ENCODE measurements at regions of chr9 and their contacts with region 1.

Region 1: GRCh38 chr9:127779136-127779981 is 893 bp upstream of the SH2D3C start:
- DNase-seq: peak in 1 of 3 donors; percentile 58
- ATAC-seq: peak; percentile 3 to 23 (median 9)
- H3K4me3 ChIP-seq: no peak overlapping the region
- H3K27ac ChIP-seq: peak overlapping the region; percentile 7 to 58 (median 47)
- H3K4me1 ChIP-seq: no peaks in the 10 kb centered on the region
- H3K27me3 ChIP-seq: no peaks in the 10 kb centered on the region
- CTCF ChIP-seq: no peak
- POLR2A ChIP-seq: no peak

Region 2: GRCh38 chr9:127586537-127586936 is 192.8 kb before region 1 on chr9:
- intact Hi-C with region 1: loop called in 1 of 2 experiments (anchors 5 kb)
- DNase-seq: peak; percentile 73 to 82 (median 75)
- ATAC-seq: peak; percentile 91 to 95 (median 94)
- H3K4me3 ChIP-seq: no peak overlapping the region
- H3K27ac ChIP-seq: no peak overlapping the region
- H3K4me1 ChIP-seq: peaks cover 0 to 4% (median under 1%) of the 10 kb centered on the region in 4 donors
- H3K27me3 ChIP-seq: no peaks in the 10 kb centered on the region
- CTCF ChIP-seq: peak; percentile 81 to 89 (median 84)
- POLR2A ChIP-seq: no peak

Region 3: GRCh38 chr9:127741831-127742434 is 37.4 kb before region 1 on chr9:
- intact Hi-C with region 1: loop called in 1 of 2 experiments (anchors 2 kb)
- DNase-seq: peak in 2 of 3 donors; percentile 70 to 78
- ATAC-seq: peak; percentile 60 to 85 (median 74)
- H3K4me3 ChIP-seq: peak overlapping the region in 1 of 3 donors; percentile 16
- H3K27ac ChIP-seq: no peak overlapping the region
- H3K4me1 ChIP-seq: no peaks in the 10 kb centered on the region
- H3K27me3 ChIP-seq: peaks cover 0 to 8% of the 10 kb centered on the region in 2 donors
- CTCF ChIP-seq: no peak
- POLR2A ChIP-seq: no peak

Region 4: GRCh38 chr9:127828262-127829031 is 49.1 kb after region 1 on chr9:
- intact Hi-C with region 1: no loop called
- DNase-seq: peak; percentile 83 to 90 (median 88)
- ATAC-seq: peak; percentile 73 to 82 (median 76)
- H3K4me3 ChIP-seq: peak overlapping the region in 2 of 3 donors; percentile 26 to 34
- H3K27ac ChIP-seq: peak overlapping the region in 2 of 3 donors; percentile 13 to 20
- H3K4me1 ChIP-seq: peaks cover 0 to 30% (median 15%) of the 10 kb centered on the region in 4 donors
- H3K27me3 ChIP-seq: no peaks in the 10 kb centered on the region
- CTCF ChIP-seq: peak in 2 of 4 donors; percentile 8 to 13
- POLR2A ChIP-seq: peak; percentile 87

Region 5: DNA sequence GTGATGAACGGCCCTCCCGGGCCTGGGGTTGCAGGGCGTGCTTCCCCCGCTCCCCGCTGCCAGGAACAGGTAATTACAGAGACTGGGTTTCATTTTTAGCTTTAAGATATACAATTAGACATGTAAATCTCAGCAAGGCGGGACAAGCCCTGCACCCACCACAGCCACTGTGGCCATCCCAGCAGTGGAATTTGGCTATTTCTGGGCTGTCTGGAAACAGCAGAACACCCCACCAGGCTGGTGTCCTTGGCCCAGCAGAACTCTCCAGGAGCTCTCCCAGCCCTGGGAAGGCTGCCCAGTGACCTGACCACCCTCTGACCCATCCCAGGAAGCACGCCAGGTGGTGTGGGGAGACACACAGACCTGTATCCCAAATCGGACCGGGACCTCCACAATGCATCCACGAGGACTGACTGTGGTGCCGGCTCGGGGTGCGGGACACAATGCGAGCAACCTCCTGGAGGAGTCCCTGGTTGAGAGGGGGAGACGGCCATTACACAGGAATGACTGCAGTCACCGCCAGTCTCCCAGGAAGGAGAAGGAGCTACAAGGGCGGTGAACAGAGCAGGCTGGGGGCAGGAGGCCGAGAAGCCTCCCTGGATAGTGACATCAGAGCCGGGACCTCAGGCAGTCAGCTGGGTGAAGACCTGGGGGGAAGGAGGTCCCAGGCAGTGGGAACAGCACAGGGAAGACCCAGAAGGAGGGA is 184.2 kb after region 1 on chr9:
- intact Hi-C with region 1: no loop called
- DNase-seq: peak; percentile 87 to 93 (median 91)
- ATAC-seq: peak; percentile 47 to 70 (median 68)
- H3K4me3 ChIP-seq: no peak overlapping the region
- H3K27ac ChIP-seq: peak overlapping the region; percentile 48 to 62 (median 57)
- H3K4me1 ChIP-seq: peaks cover 0 to 76% (median 39%) of the 10 kb centered on the region in 4 donors
- H3K27me3 ChIP-seq: no peaks in the 10 kb centered on the region
- CTCF ChIP-seq: peak in 1 of 4 donors; percentile 5
- POLR2A ChIP-seq: no peak

Region 6: GRCh38 chr9:127980706-127981558 is 201.6 kb after region 1 on chr9 and contains the start of gene EEIG1:
- intact Hi-C with region 1: no loop called
- DNase-seq: peak; percentile 97 to 98 (median 97)
- ATAC-seq: peak; percentile 83 to 92 (median 86)
- H3K4me3 ChIP-seq: peak within 1 kb of the TSS; percentile 86 to 100 (median 86)
- H3K27ac ChIP-seq: peak within 1 kb of the TSS; percentile 65 to 80 (median 75)
- H3K4me1 ChIP-seq: peaks cover 0 to 39% (median 9%) of the 10 kb centered on the region in 4 donors
- H3K27me3 ChIP-seq: no peaks in the 10 kb centered on the region
- CTCF ChIP-seq: no peak
- POLR2A ChIP-seq: peak; percentile 93
- total RNA-seq, gene EEIG1: 9.7 to 54.1 (median 23.6) TPM